IMR-90 (cell line): ENCODE measurements at regions of chrX and their contacts with region 1.

Region 1: DNA sequence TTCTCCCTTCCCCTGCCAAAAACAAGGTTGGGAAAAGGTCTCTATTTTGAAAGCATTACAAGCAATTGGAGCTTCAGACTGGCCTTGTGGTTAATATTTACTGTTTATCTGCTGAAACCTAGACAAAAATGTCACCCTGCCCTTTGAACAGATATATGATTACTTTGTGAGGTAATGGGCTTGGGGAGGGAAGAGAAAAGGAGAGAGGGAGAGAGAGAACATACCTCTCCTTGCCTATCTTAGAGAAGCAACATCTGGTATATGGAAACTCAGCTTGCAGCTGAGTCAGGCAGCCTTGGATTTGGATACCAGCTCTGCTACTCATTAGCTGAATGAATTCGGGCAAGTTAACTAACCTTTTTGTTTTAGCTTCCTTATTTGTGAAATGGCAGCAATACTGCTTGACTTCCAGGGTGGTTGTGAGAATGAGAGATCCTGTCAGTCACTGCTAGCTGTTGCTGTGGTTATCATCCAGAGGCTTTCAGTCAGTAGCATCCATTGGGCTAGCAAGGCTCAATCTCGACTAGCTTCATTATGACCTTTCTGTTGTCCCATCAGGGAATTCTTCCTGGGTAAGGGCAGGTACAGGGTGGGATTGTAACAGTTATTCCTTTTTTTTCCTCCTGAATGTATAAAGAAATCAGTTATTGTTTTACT is 41.1 kb downstream of the ZFX start:
- DNase-seq: peak; percentile 71
- ATAC-seq: peak; percentile 85
- H3K4me3 ChIP-seq: no peak overlapping the region
- H3K27ac ChIP-seq: no peak overlapping the region; the same call in 1 of the 2 replicates
- H3K4me1 ChIP-seq: peaks cover 3% of the 10 kb centered on the region
- H3K27me3 ChIP-seq: no peaks in the 10 kb centered on the region
- CTCF ChIP-seq: no peak
- POLR2A ChIP-seq: no peak
- RAD21 ChIP-seq: no peak

Region 2: DNA sequence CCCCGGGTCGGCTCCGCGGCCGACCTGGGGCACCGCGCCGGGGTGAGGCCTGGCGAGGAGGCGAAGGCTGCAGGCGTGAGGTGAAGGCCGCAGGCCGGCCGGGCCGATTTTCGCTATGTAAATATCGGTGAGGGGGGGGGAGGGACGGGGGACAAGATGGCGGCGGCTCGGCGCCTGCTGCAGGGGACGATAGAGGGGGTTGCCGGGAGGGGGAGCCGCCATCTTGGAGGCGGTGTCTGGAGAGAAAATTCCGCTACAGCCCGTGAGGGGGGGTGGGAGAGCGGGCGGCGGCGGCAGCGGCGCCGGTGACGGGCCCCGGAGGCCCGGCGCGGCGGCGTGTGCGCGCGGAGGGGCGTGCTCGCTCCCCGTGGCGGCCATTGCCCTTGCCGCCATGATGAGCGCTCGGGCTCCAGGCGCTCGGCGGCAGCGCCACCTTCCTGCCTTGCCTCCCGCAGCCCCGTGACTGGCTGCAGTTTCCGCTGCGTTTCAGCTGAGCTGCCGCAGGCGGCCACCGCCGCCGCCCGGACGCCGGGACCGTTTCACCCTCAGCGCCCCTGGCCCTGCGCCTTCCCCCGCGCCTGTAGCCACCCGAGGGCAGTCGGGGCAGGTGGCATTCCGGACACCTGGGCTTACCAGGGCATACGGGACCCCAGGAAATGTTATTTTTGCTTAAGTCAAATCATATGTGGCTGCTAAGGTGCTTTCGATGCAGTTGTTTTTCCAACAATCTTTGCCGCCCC is 40.4 kb before region 1 on chrX:
- CTCF ChIA-PET with region 1: interaction called, 4 read pairs
- POLR2A ChIA-PET with region 1: no interaction called
- dilution Hi-C with region 1: no loop called
- in situ Hi-C with region 1: no loop called
- intact Hi-C with region 1: loop called (anchors 5 kb)
- DNase-seq: peak; percentile 92
- ATAC-seq: peak; percentile 79
- H3K4me3 ChIP-seq: peak overlapping the region; percentile 98
- H3K27ac ChIP-seq: peak overlapping the region; percentile 100
- H3K4me1 ChIP-seq: peaks cover 8% of the 10 kb centered on the region
- H3K27me3 ChIP-seq: no peaks in the 10 kb centered on the region
- CTCF ChIP-seq: peak; percentile 61
- POLR2A ChIP-seq: peak; percentile 59
- RAD21 ChIP-seq: peak; percentile 45